ENCODE measurements at regions of chr17 and their contacts with region 1.

Region 1: DNA sequence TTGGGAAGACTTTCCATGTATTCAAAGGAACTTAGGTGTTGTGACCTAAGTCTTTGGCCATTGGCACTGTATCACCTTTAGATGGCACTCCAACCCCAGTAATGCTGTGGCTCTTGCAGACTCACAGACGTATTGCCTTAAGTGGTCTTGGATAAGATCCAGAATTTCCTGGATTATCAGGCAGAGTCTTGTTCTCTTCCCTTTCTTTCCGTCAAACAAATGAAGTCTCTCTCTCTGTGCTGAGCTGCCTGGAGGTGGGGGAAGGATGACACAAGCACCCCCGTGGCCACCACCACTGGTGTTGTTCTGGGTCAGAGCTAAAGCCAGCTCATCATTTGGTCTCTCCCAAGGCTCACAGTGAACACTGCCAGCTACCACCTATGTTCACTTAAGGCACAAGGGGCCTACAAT is 789.9 kb upstream of the KIF2B start:
- DNase-seq: peak; percentile 65
- H3K4me3 Mint-ChIP-seq: no peak overlapping the region
- H3K27ac Mint-ChIP-seq: no peak overlapping the region
- H3K4me1 Mint-ChIP-seq: no peaks in the 10 kb centered on the region
- H3K27me3 Mint-ChIP-seq: peaks cover 59% of the 10 kb centered on the region
- CTCF ChIP-seq: peak; percentile 74

Region 2: GRCh38 chr17:53046781-53047180 is 13.9 kb after region 1 on chr17:
- CTCF ChIA-PET with region 1: interaction called, 14 read pairs
- POLR2A ChIA-PET with region 1: no interaction called
- intact Hi-C with region 1: no loop called
- DNase-seq: no peak
- H3K4me3 Mint-ChIP-seq: no peak overlapping the region
- H3K27ac Mint-ChIP-seq: no peak overlapping the region
- H3K4me1 Mint-ChIP-seq: no peaks in the 10 kb centered on the region
- H3K27me3 Mint-ChIP-seq: no peaks in the 10 kb centered on the region
- CTCF ChIP-seq: no peak

Region 3: DNA sequence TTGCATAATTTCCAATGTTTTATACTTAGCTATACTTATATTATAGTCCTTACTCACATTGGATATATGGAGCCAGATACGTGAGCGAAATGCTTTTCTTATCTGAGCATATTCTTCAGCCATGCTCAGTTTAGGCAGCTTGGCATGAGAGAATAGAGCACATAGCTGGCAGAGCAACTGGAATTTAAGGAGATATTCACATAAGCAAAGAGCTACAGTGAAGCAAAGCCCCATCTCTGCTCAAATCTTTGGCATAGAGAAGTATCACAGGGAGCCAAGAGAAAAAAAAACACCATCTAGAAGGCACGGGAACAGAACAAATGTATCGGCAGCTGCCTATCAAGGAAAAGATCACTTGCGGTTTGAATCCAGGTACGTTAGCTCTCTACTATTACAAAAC is 55.6 kb after region 1 on chr17:
- CTCF ChIA-PET with region 1: no interaction called
- POLR2A ChIA-PET with region 1: no interaction called
- intact Hi-C with region 1: no loop called
- DNase-seq: no peak
- H3K4me3 Mint-ChIP-seq: no peak overlapping the region
- H3K27ac Mint-ChIP-seq: no peak overlapping the region
- H3K4me1 Mint-ChIP-seq: no peaks in the 10 kb centered on the region
- H3K27me3 Mint-ChIP-seq: peaks cover 85% of the 10 kb centered on the region
- CTCF ChIP-seq: no peak

Region 4: GRCh38 chr17:53570731-53571130 is 537.9 kb after region 1 on chr17:
- CTCF ChIA-PET with region 1: no interaction called
- POLR2A ChIA-PET with region 1: no interaction called
- intact Hi-C with region 1: loop called (anchors 2 kb)
- DNase-seq: no peak
- H3K4me3 Mint-ChIP-seq: peak overlapping the region; percentile 17
- H3K27ac Mint-ChIP-seq: peak overlapping the region; percentile 4
- H3K4me1 Mint-ChIP-seq: peaks cover 14% of the 10 kb centered on the region
- H3K27me3 Mint-ChIP-seq: no peaks in the 10 kb centered on the region
- CTCF ChIP-seq: no peak

Region 5: GRCh38 chr17:54426296-54426886 is 1393.5 kb after region 1 on chr17:
- CTCF ChIA-PET with region 1: interaction called, 4 read pairs
- POLR2A ChIA-PET with region 1: no interaction called
- intact Hi-C with region 1: loop called (anchors 2 kb)
- DNase-seq: peak; percentile 24
- H3K4me3 Mint-ChIP-seq: no peak overlapping the region
- H3K27ac Mint-ChIP-seq: no peak overlapping the region
- H3K4me1 Mint-ChIP-seq: no peaks in the 10 kb centered on the region
- H3K27me3 Mint-ChIP-seq: no peaks in the 10 kb centered on the region
- CTCF ChIP-seq: peak; percentile 60

Region 6: DNA sequence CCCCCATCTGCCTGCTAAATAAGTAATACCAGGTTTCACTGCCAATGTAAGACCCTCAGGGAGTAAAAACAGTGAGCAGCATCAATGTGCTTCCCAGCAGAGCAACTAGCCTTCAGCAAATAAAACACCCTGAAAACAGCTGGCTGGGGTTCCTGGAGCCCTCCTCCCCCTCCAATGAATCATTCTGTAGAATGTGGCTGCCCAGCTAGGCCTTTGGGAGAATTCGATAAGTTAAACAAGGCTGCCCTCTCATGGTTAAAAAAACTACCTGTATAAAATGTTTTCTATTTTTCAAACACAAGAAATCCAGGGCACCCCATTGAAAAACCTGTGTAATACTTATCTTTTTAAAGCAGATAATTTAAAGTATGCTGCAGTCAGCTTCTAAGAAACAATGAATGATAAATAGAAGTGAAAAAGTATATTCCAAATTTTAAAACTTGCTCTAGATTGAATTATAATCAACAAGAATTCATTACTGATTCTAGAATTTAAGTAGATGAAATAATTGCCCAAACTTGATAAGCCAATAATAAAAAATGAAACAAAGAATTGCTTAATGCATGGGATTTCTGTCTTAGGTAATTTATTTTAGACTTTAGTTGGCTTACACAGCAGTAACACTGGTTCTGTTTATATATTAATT is 1858.4 kb after region 1 on chr17:
- CTCF ChIA-PET with region 1: interaction called, 17 read pairs
- POLR2A ChIA-PET with region 1: no interaction called
- intact Hi-C with region 1: loop called (anchors 1 kb)
- DNase-seq: peak; percentile 70
- H3K4me3 Mint-ChIP-seq: no peak overlapping the region
- H3K27ac Mint-ChIP-seq: no peak overlapping the region
- H3K4me1 Mint-ChIP-seq: peaks cover 5% of the 10 kb centered on the region
- H3K27me3 Mint-ChIP-seq: no peaks in the 10 kb centered on the region
- CTCF ChIP-seq: peak; percentile 52